ENCODE measurements at regions of chr12 and their contacts with region 1.

Region 1: DNA sequence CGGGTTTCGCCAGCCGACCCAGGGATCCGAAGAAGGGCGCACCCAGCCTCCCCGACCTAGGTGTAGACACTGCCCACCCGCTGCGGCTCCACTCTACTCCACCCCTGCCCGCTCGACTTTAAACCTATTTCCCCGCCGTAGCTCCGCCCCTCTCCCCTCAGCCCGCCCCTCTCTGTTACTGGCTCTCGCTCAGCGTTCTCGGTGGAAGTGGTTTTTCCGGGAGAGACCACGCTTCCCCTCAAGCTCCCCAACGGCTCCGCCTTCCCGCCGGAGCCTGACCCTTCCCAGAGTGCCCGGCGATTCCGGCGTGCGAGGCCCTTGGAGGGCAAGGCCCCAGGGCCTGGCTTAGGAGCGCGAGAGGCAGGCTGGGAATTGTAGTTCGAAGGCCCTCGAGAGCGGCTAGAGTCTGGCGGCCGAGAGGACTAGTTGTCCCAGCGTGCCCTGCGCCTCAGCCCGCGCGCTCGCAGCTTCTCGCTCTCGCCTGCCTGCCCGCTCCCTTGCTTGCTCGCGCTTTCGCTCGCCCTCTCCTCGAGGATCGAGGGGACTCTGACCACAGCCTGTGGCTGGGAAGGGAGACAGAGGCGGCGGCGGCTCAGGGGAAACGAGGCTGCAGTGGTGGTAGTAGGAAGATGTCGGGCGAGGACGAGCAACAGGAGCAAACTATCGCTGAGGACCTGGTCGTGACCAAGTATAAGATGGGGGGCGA is at the start of gene PA2G4:
- DNase-seq: peak; percentile 99
- H3K4me3 Mint-ChIP-seq: peak within 1 kb of the TSS; percentile 98
- H3K27ac Mint-ChIP-seq: peak within 1 kb of the TSS; percentile 89
- H3K4me1 Mint-ChIP-seq: peaks cover 49% of the 10 kb centered on the region
- H3K27me3 Mint-ChIP-seq: no peaks in the 10 kb centered on the region
- total RNA-seq, gene PA2G4: 404 and 419 TPM in 2 replicates

Region 2: GRCh38 chr12:54950071-54950727 is 1154.1 kb before region 1 on chr12:
- intact Hi-C with region 1: no loop called
- DNase-seq: no peak
- H3K4me3 Mint-ChIP-seq: peak overlapping the region; percentile 40
- H3K27ac Mint-ChIP-seq: peak overlapping the region; percentile 66
- H3K4me1 Mint-ChIP-seq: peaks cover 52% of the 10 kb centered on the region
- H3K27me3 Mint-ChIP-seq: no peaks in the 10 kb centered on the region

Region 3: DNA sequence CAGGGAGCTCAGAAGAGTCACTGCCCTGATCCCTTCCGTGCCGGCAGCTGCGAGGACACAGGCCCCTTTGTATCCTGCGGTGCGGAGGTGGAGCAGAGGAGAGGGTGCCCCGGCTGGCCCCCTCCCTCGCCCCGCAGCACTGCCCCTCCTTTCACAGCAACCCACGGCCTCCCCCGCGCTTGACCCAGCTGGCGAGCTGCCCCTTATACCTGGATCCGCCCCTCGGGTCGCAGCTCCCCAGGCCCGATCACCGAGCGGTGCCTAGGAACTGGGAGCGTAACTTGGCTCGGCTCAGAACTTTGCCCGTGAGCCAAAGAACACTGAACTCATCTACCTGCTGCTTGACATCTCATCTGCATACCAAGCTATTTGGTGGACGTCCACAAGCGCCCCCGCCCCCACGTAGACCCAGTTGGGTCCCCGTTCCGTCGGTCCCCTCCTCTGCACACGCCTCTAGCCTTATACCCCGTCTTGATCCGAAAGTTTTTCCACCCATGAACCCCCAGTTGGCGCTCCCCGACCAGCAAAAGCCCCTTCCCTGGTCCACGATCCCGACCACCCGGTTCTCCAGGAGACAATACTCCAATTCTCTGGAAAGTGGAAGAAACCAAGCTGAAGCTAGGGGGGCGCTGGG is 274.2 kb before region 1 on chr12:
- intact Hi-C with region 1: loop called (anchors 1 kb)
- DNase-seq: peak; percentile 22
- H3K4me3 Mint-ChIP-seq: peak overlapping the region; percentile 98
- H3K27ac Mint-ChIP-seq: peak overlapping the region; percentile 92
- H3K4me1 Mint-ChIP-seq: peaks cover 37% of the 10 kb centered on the region
- H3K27me3 Mint-ChIP-seq: no peaks in the 10 kb centered on the region

Region 4: DNA sequence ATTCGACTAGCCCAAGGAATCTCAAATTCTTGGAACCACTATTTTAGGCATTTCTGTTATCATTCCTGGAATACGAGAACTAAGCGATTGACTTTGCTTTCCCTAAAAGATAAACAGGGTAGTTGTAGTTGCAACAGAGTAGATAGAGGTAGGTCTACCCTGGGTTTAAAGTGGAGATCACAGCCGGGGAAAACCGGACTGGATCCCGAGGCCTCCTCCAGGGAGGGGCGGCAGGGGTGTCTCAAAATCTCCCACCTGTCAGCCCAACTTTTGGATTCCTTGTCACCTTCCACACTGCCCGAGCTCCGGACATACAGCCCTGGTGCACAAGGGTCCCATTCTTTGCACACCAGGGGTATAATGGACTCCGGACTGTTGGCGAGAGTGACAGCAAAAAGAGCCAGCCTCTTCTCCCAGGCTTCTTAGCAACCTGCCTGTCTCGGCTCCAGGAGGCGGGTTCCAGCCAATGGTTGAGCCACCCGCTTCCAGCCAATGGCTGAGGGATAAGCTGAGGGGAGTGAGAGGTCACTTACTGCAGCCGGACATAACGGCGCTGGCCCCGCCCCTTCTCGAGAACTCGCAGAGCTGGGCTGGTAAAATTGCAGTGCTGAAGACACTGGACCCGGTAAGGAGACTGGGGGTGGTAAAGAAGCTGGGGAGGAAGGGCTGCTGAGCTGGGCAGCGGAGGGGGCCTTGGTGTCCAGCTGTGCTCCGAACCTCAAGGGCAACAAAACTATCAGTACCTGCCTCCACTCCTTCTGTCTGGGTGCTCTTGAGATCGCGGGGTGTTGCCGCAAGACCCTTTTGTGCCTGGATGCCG is 107.3 kb before region 1 on chr12 and contains the start of gene SUOX:
- intact Hi-C with region 1: loop called (anchors 1 kb)
- DNase-seq: peak; percentile 50
- H3K4me3 Mint-ChIP-seq: peak within 1 kb of the TSS; percentile 88
- H3K27ac Mint-ChIP-seq: peak within 1 kb of the TSS; percentile 64
- H3K4me1 Mint-ChIP-seq: peaks cover 30% of the 10 kb centered on the region
- H3K27me3 Mint-ChIP-seq: no peaks in the 10 kb centered on the region
- total RNA-seq, gene SUOX: 12.0 and 12.9 TPM in 2 replicates

Region 5: GRCh38 chr12:56007564-56008559 is 96.4 kb before region 1 on chr12:
- intact Hi-C with region 1: loop called (anchors 1 kb)
- DNase-seq: peak; percentile 55
- H3K4me3 Mint-ChIP-seq: peak overlapping the region; percentile 92
- H3K27ac Mint-ChIP-seq: peak overlapping the region; percentile 88
- H3K4me1 Mint-ChIP-seq: peaks cover 32% of the 10 kb centered on the region
- H3K27me3 Mint-ChIP-seq: peaks cover 3% of the 10 kb centered on the region

Region 6: GRCh38 chr12:56018356-56018755 is 85.9 kb before region 1 on chr12:
- intact Hi-C with region 1: no loop called
- DNase-seq: no peak
- H3K4me3 Mint-ChIP-seq: no peak overlapping the region
- H3K27ac Mint-ChIP-seq: no peak overlapping the region
- H3K4me1 Mint-ChIP-seq: peaks cover 40% of the 10 kb centered on the region
- H3K27me3 Mint-ChIP-seq: no peaks in the 10 kb centered on the region

Region 7: DNA sequence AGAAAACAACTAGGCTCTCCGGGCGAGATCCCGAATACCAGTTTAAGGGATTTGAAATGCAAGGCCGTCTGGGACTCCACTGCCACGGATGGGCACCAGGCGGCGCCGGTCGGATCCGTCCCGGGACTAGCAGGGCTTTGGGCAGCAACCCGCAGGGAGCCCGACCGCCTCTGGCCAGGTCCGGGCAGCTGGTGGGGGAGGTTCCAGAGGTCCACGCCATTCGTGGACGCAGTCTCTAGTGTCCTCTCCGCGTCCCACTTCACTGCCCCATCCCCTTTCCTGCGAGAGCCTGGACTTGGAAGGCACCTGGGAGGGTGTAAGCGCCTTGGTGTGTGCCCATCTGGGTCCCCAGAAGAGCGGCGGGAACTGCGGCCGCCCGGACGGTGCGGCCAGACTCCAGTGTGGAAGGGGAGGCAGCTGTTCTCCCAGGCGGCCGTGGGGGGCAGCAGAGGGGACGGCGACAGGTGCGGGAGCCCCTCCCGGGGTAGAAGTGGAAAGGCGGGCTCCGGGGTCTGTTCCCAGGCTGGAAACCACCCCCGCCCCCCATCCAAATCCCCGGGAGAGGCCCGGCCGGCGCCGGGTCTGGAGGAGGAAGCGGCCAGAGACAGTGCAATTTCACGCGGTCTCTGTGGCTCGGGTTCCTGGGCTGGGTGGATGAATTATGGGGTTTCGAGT is 25.1 kb before region 1 on chr12:
- intact Hi-C with region 1: loop called (anchors 1 kb)
- DNase-seq: peak; percentile 25
- H3K4me3 Mint-ChIP-seq: peak overlapping the region; percentile 80
- H3K27ac Mint-ChIP-seq: no peak overlapping the region
- H3K4me1 Mint-ChIP-seq: peaks cover 13% of the 10 kb centered on the region
- H3K27me3 Mint-ChIP-seq: peaks cover 25% of the 10 kb centered on the region

Region 8: DNA sequence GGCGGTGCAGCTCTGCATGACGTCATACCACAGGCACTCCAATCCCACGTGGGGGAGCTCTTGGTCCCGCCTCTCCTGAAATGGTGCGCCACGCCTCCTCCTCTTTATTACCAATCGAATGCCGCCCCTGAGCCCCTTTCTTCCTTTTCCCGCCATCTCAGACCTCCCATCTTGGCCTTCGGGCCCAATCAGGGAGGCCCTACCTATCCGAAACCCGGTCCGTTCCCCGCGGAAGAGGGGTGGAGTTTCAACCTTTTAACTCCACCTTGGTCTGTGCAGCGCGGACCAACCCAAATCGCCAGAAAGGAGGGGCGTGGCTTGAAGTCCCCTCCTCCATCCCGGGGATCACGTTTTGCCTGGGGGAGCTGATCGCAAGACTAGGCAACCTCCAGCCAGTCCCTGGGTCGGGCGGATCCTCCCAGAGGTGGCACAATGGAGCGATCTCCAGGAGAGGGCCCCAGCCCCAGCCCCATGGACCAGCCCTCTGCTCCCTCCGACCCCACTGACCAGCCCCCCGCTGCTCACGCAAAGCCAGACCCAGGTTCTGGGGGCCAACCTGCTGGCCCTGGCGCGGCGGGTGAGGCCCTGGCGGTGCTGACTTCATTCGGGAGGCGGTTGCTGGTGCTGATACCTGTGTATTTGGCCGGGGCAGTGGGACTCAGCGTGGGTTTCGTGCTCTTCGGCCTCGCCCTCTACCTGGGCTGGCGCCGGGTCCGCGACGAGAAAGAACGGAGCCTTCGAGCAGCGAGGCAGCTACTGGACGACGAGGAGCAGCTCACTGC is 23.8 kb after region 1 on chr12 and contains the start of gene ESYT1:
- intact Hi-C with region 1: loop called (anchors 1 kb)
- DNase-seq: peak; percentile 98
- H3K4me3 Mint-ChIP-seq: peak within 1 kb of the TSS; percentile 97
- H3K27ac Mint-ChIP-seq: peak within 1 kb of the TSS; percentile 94
- H3K4me1 Mint-ChIP-seq: peaks cover 62% of the 10 kb centered on the region
- H3K27me3 Mint-ChIP-seq: no peaks in the 10 kb centered on the region
- total RNA-seq, gene ESYT1: 159 and 161 TPM in 2 replicates

Region 9: GRCh38 chr12:56152318-56153033 is 48.2 kb after region 1 on chr12 and contains the start of gene MYL6B:
- intact Hi-C with region 1: loop called (anchors 1 kb)
- DNase-seq: peak; percentile 92
- H3K4me3 Mint-ChIP-seq: peak within 1 kb of the TSS; percentile 88
- H3K27ac Mint-ChIP-seq: peak within 1 kb of the TSS; percentile 99
- H3K4me1 Mint-ChIP-seq: peaks cover 39% of the 10 kb centered on the region
- H3K27me3 Mint-ChIP-seq: no peaks in the 10 kb centered on the region
- total RNA-seq, gene MYL6B: 58.8 and 67.6 TPM in 2 replicates

Region 10: DNA sequence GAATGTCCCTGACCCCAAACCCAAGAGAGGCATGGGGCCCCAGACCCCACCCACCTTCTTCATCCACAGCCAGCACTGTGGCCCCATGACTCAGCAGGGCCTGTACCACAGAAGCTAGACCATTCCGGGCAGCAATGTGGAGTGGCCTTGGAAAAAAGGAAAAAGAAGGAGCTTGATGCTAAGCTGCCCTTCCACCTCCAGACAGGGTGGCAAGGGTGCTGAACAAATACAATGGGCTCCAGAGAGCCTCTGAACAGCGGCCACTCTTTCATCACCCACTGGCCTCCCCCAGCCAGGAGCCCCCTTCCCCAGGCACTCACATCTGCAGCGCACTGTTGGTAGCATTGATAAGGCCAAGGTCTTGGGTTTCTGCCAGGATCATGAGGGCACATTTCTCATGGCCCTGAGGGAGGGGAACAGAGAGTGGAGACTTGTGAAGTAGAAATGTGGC is 139.5 kb after region 1 on chr12:
- intact Hi-C with region 1: no loop called
- DNase-seq: no peak
- H3K4me3 Mint-ChIP-seq: no peak overlapping the region
- H3K27ac Mint-ChIP-seq: no peak overlapping the region
- H3K4me1 Mint-ChIP-seq: no peaks in the 10 kb centered on the region
- H3K27me3 Mint-ChIP-seq: no peaks in the 10 kb centered on the region

Region 11: DNA sequence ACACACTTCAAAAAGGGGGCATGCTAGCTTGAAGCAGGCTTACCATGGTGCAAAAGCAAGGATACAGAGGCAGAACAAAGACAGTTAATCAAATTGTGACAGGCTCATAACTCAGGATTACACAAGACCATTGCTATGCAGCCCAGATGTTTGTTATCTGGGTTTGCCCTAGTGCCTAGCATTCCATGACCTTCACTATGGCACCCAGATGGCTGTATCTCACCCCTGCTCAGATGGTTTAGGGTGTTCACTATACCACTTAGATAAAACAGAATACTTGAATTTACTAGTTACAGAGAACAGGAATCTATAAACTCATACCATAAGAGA is 773.7 kb after region 1 on chr12:
- intact Hi-C with region 1: no loop called
- DNase-seq: no peak
- H3K4me3 Mint-ChIP-seq: no peak overlapping the region
- H3K27ac Mint-ChIP-seq: no peak overlapping the region
- H3K4me1 Mint-ChIP-seq: no peaks in the 10 kb centered on the region
- H3K27me3 Mint-ChIP-seq: no peaks in the 10 kb centered on the region

Measured in activated T-helper 1 cell treated with anti-CD3 and anti-CD28 coated beads, Interleukin-12 subunit alpha, Interleukin-12 subunit beta, Interleukin-2, Interleukin-4 antibody, amounts not matched to agents 30 ng/mL and 10 ng/mL and 1 ng/mL, durations not matched to agents 14 hours and 24 hours and 36 hours (primary cell).